K562 (cell line): ENCODE measurements at regions of chr13 and their contacts with region 1.

Region 1: DNA sequence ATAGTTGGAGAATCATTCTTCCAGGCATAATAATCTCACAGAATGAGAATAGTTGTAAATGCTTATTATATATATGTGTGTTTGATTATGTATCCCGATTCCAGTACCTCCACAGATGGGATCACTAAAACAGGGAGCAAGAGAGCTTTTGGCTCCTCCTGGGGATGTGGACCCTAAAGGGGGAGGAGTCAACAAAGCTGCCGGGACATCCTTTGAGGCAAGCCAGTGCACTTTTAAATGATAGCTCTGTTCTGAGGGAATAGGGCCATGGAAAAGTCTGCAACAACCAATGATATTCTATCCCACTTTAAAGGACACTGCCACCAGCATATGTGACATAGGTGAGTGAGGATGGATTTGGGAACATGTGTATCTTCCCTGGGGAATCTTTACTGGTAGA is 40.8 kb downstream of the SLITRK5 start:
- DNase-seq: no peak
- ATAC-seq: no peak
- H3K4me3 ChIP-seq: no peak overlapping the region
- H3K27ac ChIP-seq: no peak overlapping the region
- H3K4me1 ChIP-seq: no peaks in the 10 kb centered on the region
- H3K27me3 ChIP-seq: no peaks in the 10 kb centered on the region
- CTCF ChIP-seq: no peak
- EP300 ChIP-seq: no peak
- POLR2A ChIP-seq: no peak
- RAD21 ChIP-seq: no peak

Region 2: DNA sequence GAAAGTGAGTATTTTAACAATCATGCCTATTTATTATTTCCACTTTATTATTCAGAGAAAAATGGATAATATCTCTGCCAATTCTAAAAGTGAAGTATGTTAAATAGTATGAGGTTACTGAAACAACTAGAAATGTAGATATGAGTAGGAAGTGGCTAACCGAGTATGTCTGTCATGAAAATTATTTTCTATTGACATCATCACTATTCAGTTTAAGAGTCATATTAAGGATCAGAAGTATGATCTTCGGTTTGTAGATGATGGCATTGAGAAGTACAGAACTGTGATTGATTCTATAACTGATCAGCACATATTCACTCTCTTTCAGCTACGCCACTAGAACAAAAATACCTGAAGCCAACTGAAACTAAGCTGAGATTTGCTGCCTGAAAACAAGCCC is 187.2 kb before region 1 on chr13:
- CTCF ChIA-PET with region 1: interaction called, 10 read pairs
- POLR2A ChIA-PET with region 1: no interaction called
- in situ Hi-C with region 1: no loop called
- intact Hi-C with region 1: no loop called
- DNase-seq: no peak
- ATAC-seq: no peak
- H3K4me3 ChIP-seq: no peak overlapping the region
- H3K27ac ChIP-seq: no peak overlapping the region
- H3K4me1 ChIP-seq: no peaks in the 10 kb centered on the region
- H3K27me3 ChIP-seq: no peaks in the 10 kb centered on the region
- CTCF ChIP-seq: no peak
- EP300 ChIP-seq: no peak
- POLR2A ChIP-seq: no peak
- RAD21 ChIP-seq: no peak

Region 3: DNA sequence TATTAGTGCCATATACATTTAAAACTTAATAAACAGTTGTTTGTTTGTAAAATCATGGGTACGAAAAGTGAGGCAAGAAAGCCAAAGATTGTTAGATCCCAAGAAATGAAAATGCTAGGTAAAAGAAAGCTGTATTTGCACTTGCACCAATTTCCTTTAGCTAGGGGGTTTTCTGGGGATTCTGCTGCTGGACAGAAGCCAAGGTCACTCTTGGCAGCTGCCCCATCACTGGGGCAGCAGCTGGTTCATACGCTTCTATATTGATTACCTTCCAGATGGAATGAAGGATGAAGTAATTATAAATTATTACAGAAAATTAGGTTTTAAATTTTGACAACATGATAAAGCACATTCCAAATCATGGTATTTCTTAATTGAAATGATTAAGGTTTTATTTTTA is 86.5 kb after region 1 on chr13:
- CTCF ChIA-PET with region 1: no interaction called
- POLR2A ChIA-PET with region 1: no interaction called
- in situ Hi-C with region 1: no loop called
- intact Hi-C with region 1: no loop called
- DNase-seq: no peak
- ATAC-seq: no peak
- H3K4me3 ChIP-seq: no peak overlapping the region
- H3K27ac ChIP-seq: no peak overlapping the region
- H3K4me1 ChIP-seq: no peaks in the 10 kb centered on the region
- H3K27me3 ChIP-seq: no peaks in the 10 kb centered on the region
- CTCF ChIP-seq: no peak
- EP300 ChIP-seq: no peak
- POLR2A ChIP-seq: no peak
- RAD21 ChIP-seq: no peak

Region 4: DNA sequence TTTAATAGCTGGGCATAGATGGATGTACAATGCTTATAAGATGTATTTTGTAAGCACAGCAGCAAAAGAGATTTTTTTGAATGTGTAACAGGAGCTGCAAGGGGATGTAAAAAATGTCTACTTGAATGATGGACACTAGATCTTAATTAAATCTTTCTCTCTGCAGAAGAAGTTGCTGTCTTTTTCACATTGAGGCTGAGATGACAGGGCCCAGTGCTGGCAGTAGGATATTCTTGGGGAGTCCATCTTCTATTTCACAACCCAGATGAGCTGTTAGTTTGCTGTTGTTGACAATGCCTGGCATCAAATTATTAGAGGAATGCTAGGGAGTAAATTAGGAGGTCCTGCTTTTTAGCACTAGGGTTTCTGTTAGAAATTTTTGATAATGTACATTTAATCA is 657.9 kb after region 1 on chr13:
- CTCF ChIA-PET with region 1: no interaction called
- POLR2A ChIA-PET with region 1: no interaction called
- in situ Hi-C with region 1: no loop called
- intact Hi-C with region 1: no loop called
- DNase-seq: no peak
- ATAC-seq: no peak
- H3K4me3 ChIP-seq: no peak overlapping the region
- H3K27ac ChIP-seq: no peak overlapping the region
- H3K4me1 ChIP-seq: no peaks in the 10 kb centered on the region
- H3K27me3 ChIP-seq: no peaks in the 10 kb centered on the region
- CTCF ChIP-seq: no peak
- EP300 ChIP-seq: no peak
- POLR2A ChIP-seq: no peak
- RAD21 ChIP-seq: no peak